ENCODE measurements at regions of chr5 and their contacts with region 1.

Region 1: DNA sequence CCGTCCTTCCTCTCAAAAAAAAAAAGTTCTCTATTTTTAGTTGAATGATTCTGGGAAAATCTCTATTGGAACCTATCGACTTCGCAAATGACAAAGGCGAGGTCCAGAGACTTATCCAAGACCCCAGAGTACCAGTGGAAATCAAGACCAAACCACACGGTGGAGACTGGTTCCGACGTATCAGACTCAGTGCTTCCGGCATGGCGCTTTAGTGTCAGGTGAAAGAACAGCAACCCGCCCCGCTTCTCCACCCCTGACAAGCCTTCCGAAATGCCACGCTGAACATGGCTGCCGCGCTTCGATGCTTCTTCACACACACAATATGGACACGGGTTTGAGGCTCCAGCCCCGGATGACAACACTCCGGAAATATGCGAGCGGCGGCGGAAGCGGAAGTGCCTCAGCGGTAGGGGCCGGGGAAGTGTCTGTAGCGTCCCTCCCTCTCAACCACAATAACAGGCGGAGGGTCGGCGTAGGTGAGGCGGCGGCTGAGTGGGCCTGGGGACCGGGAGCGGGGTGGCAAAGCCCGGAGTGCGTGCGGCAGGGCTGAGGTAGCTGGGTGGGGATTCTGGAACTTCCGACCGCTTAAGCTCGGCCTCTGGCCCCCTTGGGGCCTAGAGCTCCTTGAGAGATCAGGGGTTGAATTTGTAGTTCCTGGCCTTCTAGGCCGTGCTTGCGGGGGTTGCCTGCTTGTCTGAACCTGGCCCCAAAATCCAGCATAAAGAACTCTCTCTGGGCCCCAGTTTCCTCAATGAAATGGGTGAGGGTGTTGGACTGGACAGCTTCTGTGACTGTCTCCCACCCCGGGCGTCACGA is at the start of gene FBXO38:
- ATAC-seq: peak; percentile 96 to 99 (median 99)
- H3K4me3 ChIP-seq: peak within 1 kb of the TSS; percentile 74 to 85 (median 74)
- H3K27ac ChIP-seq: peak within 1 kb of the TSS; percentile 80 to 91
- H3K4me1 ChIP-seq: peaks cover 11 to 19% of the 10 kb centered on the region in 2 donors
- total RNA-seq, gene FBXO38: 28.0 to 62.0 (median 37.5) TPM

Region 2: DNA sequence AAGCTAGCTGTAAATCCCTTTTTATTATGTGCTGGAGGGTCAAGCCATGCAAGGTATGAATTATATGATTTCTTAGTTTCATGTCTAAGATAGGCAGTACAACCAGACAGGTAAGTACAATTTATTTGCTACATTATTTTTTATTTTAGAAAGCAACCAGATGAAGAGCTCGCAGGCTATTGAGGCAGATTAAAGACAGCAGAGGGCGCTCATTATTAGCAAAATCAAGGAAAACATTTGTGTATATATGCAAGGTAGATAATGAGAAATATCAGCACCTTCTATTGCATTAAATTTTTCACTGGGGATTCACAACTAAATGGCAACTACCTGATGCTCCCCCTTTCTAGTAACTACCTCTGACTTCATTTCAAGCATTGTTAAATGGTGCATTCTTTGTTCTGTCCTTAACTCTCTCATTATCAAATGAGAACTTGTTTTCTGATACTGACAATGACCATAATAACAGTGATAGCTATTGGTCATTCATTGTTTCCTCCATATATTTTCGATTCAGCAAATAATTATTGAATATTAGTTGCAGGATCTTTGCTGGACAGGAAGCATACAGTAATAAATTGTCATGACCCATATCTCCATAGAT is 496.6 kb before region 1 on chr5:
- in situ Hi-C with region 1: no loop called
- ATAC-seq: peak in 4 of 8 experiments; percentile 35 to 59 (median 38)
- H3K4me3 ChIP-seq: no peak overlapping the region
- H3K27ac ChIP-seq: no peak overlapping the region
- H3K4me1 ChIP-seq: no peaks in the 10 kb centered on the region

Region 3: DNA sequence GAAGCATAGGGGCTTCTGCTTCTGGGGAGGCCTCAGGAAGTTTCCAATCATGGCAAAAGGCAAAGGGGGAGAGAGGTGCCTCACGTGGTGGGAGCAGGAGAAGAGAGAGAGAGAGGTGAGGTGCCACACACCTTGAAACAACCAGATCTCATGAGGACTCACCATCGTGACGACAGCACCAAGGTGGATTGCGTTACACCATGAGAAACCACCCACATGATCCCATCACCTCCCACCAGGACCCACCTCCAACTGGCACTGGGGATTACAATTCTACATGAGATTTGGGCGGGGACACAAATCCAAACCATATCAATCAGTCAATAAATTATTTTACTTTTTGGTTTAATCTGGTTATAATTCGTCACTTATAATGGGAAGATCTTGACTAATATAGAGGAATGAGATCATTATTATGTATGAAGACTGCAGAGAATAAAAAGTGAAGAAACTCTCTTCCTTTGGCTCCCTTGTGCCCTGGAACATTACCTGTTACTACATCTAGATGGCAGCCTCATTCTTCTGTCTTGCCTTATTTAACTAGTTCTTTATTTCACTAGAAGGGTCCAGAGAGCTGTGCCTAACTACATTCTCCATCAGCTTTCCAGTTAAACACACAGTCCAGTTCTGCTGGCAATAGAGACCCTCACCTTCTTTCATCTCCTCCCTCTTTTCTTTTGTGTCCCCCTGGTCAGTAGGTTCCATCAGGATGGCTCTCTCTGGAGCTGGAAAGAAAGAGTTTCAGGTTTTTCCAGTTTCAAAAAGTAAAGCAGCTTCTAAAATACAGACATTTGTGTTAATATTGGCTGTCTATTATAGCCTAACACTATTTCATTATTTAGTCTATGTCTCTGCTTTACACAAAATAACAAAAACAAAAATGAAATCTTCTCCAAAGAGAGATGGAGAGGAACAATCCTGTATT is 93.2 kb before region 1 on chr5:
- in situ Hi-C with region 1: loop called in 1 of 9 experiments (anchors 25 kb)
- ATAC-seq: peak in 4 of 8 experiments; percentile 60 to 79 (median 70)
- H3K4me3 ChIP-seq: no peak overlapping the region
- H3K27ac ChIP-seq: no peak overlapping the region
- H3K4me1 ChIP-seq: no peaks in the 10 kb centered on the region